Activated CD8-positive, alpha-beta T cell treated with anti-CD3 and anti-CD28 coated beads for 36 hours (primary cell): ENCODE measurements at regions of chr22 and their contacts with region 1.

Region 1: GRCh38 chr22:50341977-50342650 is 1.0 kb upstream of the PPP6R2 start:
- DNase-seq: peak; percentile 94
- ATAC-seq: peak; percentile 58
- H3K4me3 Mint-ChIP-seq: peak overlapping the region; percentile 75
- H3K27ac Mint-ChIP-seq: peak overlapping the region; percentile 86
- H3K4me1 Mint-ChIP-seq: peaks cover 13% of the 10 kb centered on the region
- H3K27me3 Mint-ChIP-seq: no peaks in the 10 kb centered on the region
- CTCF ChIP-seq: peak; percentile 96

Region 2: DNA sequence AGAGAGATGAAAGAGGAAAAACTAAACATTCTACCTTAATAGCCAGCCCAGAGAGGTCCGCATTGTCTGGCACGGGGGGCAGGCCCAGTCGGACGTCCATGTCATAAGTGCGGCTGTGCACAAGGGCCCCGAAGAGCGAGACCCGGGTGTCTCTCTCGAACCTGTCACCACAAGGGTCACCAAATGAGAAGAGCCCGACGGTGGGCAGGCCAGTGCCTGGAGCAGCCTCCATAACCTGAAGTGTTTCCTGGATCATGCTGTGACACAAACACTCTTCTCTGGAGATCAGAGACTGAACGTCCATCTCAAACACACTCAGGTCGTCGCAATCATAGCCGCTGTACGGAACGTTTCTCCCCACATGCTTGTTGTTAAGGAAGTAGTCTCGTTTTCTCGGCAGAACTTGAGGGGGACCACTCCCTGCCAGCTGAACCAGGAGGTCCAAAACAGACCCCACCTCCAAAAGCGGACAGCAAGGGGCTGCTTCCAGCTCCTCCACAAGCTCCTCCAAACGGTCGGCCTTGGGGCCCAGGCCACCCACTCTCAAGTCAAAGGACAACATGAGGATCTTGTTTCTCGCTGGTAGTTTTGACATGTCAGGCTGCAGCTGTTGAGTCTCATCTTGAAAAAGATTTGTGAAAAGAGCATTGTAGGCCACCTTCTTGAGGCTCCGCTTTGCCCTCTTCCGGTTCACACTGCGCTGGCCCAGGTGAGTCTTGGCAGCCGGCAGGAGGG is 98.3 kb before region 1 on chr22:
- CTCF ChIA-PET with region 1: interaction called, 18 read pairs
- POLR2A ChIA-PET with region 1: interaction called, 4 read pairs
- intact Hi-C with region 1: no loop called
- DNase-seq: no peak
- ATAC-seq: no peak
- H3K4me3 Mint-ChIP-seq: peak overlapping the region; percentile 85
- H3K27ac Mint-ChIP-seq: peak overlapping the region; percentile 99
- H3K4me1 Mint-ChIP-seq: peaks cover 24% of the 10 kb centered on the region
- H3K27me3 Mint-ChIP-seq: no peaks in the 10 kb centered on the region
- CTCF ChIP-seq: no peak

Region 3: GRCh38 chr22:50250555-50251476 is 91.3 kb before region 1 on chr22 and contains the start of gene HDAC10:
- CTCF ChIA-PET with region 1: interaction called, 33 read pairs
- POLR2A ChIA-PET with region 1: interaction called, 7 read pairs
- intact Hi-C with region 1: loop called (anchors 5 kb)
- DNase-seq: peak; percentile 90
- ATAC-seq: peak; percentile 89
- H3K4me3 Mint-ChIP-seq: peak within 1 kb of the TSS; percentile 85
- H3K27ac Mint-ChIP-seq: peak within 1 kb of the TSS; percentile 81
- H3K4me1 Mint-ChIP-seq: peaks cover 15% of the 10 kb centered on the region
- H3K27me3 Mint-ChIP-seq: no peaks in the 10 kb centered on the region
- CTCF ChIP-seq: no peak
- total RNA-seq, gene HDAC10: 43.0 to 44.3 TPM

Region 4: GRCh38 chr22:50276143-50276542 is 66.0 kb before region 1 on chr22:
- CTCF ChIA-PET with region 1: interaction called, 22 read pairs
- POLR2A ChIA-PET with region 1: interaction called, 5 read pairs
- intact Hi-C with region 1: loop called (anchors 5 kb)
- DNase-seq: peak; percentile 67
- ATAC-seq: peak; percentile 80
- H3K4me3 Mint-ChIP-seq: no peak overlapping the region
- H3K27ac Mint-ChIP-seq: no peak overlapping the region
- H3K4me1 Mint-ChIP-seq: peaks cover 1% of the 10 kb centered on the region
- H3K27me3 Mint-ChIP-seq: peaks cover 8% of the 10 kb centered on the region
- CTCF ChIP-seq: peak; percentile 70

Region 5: DNA sequence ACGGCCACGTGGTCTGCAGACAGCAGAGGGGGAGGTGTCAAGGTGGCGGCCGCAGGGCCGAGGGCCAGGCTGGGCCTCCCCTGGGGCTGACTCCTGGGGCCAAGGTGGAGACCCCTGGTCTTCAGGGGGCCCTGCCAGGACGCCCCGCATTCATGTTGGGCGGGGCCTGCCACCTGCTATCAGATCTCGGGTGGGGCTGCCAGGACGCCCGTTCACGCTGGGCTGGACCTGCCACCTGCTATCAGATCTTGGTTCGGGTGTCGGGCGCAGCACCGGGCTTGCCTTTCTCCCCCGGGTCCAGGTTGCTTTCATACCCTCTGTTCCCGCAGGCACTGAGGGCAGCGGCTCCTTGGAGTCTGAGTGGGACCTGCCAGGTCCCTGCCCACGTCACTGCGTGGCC is 55.8 kb before region 1 on chr22:
- CTCF ChIA-PET with region 1: no interaction called
- POLR2A ChIA-PET with region 1: no interaction called
- intact Hi-C with region 1: no loop called
- DNase-seq: no peak
- ATAC-seq: no peak
- H3K4me3 Mint-ChIP-seq: no peak overlapping the region
- H3K27ac Mint-ChIP-seq: no peak overlapping the region
- H3K4me1 Mint-ChIP-seq: no peaks in the 10 kb centered on the region
- H3K27me3 Mint-ChIP-seq: no peaks in the 10 kb centered on the region
- CTCF ChIP-seq: no peak

Region 6: GRCh38 chr22:50361688-50362087 is 19.6 kb after region 1 on chr22:
- CTCF ChIA-PET with region 1: interaction called, 13 read pairs
- POLR2A ChIA-PET with region 1: interaction called, 6 read pairs
- intact Hi-C with region 1: no loop called
- DNase-seq: peak; percentile 69
- ATAC-seq: peak; percentile 90
- H3K4me3 Mint-ChIP-seq: peak overlapping the region; percentile 31
- H3K27ac Mint-ChIP-seq: peak overlapping the region; percentile 85
- H3K4me1 Mint-ChIP-seq: peaks cover 56% of the 10 kb centered on the region
- H3K27me3 Mint-ChIP-seq: no peaks in the 10 kb centered on the region
- CTCF ChIP-seq: no peak